A549 (cell line): ENCODE measurements at regions of chr10 and their contacts with region 1.

Region 1: DNA sequence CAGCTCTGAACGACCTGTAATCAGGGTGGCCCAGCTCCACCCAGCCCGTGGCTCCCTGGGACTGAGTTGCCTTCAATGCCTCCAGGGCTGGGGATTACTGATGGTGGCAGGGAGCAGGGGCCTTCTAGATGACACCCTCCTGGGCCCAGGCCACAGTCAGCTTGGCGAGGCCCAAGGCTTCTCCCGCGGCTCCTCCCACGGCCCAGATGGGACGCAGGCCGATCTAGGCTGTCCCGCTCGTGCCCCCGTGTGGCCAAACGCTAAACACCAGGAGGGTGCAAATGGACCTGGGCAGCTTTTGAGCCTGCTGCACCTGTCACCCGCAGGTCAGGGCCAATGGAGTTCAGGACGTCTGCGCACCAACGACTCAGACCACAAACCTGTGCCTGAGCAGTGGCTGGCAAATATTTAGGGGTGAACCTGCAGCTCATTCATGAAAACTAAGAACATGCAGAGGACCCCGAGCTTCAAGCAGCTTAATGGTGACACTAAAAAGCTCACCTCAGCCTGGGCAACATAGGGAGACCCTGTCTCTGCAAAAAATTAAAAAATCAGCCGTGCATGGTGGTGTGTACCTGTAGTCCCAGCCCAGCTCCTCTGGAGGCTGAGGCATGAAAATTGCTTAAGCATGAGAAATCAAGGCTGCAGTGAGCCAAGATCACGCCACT is 43.2 kb downstream of the ASB13 start:
- DNase-seq: peak; percentile 75 to 88
- ATAC-seq: peak; percentile 93 to 98
- H3K4me3 ChIP-seq: no peak overlapping the region
- H3K27ac ChIP-seq: peak overlapping the region; percentile 78 to 91
- H3K4me1 ChIP-seq: peaks cover 14% of the 10 kb centered on the region
- CTCF ChIP-seq: peak; percentile 86
- EP300 ChIP-seq: no peak
- POLR2A ChIP-seq: no peak
- RAD21 ChIP-seq: peak; percentile 99

Region 2: DNA sequence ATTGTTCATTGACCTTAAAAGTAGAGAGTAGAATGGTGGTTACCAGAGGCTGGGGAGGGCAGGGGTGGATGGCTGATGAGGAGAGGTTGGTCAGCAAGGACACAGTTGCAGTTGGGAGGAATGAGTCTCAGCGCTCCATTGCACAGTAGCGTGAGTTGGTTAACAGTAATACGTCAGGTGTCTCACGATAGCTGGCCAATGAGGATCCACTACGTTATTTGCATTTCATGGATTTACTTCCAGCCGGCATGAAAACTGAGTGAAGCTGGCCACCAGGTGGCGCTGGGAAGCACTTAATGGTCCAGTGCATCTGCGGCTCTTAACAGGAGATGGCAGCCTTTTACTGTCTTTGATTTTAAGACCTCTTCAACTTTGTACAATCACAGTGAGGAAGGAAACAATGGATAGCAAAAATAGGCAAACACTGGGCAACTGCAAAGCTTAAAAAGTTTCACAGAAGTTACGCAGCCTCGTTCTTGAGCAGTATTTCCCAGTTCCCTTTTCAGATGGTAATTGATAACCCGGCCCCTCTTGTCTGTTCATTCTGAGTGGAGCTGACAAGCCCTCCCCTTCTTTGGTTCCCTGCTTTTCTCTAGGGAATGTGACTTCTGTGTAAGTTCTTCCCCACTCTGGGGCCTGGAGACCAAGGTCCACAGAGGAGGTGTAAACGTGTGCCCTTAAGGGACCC is 773.5 kb before region 1 on chr10:
- CTCF ChIA-PET with region 1: interaction called, 21 read pairs
- POLR2A ChIA-PET with region 1: no interaction called
- DNase-seq: peak; percentile 80 to 98
- ATAC-seq: peak; percentile 85
- H3K4me3 ChIP-seq: no peak overlapping the region
- H3K27ac ChIP-seq: peak overlapping the region; percentile 91 to 95
- H3K4me1 ChIP-seq: peaks cover 65% of the 10 kb centered on the region
- CTCF ChIP-seq: peak; percentile 100
- EP300 ChIP-seq: no peak
- POLR2A ChIP-seq: no peak
- RAD21 ChIP-seq: peak; percentile 99 to 100

Region 3: DNA sequence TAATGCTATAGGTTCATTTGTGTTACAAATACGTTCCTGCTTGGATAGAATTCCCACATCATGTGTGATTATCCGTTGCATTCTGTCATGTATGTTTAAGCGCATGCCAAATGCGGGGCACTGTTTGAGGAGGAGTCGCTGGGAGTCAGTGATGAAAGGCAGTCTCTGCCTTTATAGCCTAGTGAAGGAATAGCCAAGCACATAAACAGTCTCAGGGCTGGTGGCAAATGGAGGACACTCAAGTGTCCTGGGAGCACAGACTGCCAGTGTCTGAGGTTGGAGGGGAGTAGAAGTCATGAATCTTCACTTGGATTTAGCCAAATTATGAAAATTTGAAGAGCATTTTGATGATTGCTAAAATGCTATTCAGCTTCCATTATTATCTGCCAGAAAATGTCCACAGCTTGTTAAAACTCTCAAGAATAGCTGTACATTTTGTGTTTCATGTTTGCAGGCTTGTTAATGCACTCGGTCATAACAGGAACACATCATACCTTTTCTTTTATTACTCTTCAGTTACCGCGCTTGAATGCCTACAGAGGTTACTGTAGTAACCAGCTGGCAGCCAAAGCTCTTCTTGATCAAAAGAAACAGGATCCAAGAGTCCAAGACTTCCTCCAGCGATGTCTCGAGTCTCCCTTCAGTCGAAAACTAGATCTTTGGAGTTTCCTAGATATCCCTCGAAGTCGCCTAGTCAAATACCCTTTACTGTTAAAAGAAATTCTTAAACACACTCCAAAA is 169.3 kb before region 1 on chr10:
- CTCF ChIA-PET with region 1: interaction called, 432 read pairs
- POLR2A ChIA-PET with region 1: no interaction called
- DNase-seq: no peak
- ATAC-seq: no peak
- H3K4me3 ChIP-seq: no peak overlapping the region
- H3K27ac ChIP-seq: no peak overlapping the region
- H3K4me1 ChIP-seq: peaks cover 29% of the 10 kb centered on the region; the same call in 2 of the 3 replicates
- CTCF ChIP-seq: no peak
- EP300 ChIP-seq: no peak
- POLR2A ChIP-seq: no peak
- RAD21 ChIP-seq: no peak

Region 4: DNA sequence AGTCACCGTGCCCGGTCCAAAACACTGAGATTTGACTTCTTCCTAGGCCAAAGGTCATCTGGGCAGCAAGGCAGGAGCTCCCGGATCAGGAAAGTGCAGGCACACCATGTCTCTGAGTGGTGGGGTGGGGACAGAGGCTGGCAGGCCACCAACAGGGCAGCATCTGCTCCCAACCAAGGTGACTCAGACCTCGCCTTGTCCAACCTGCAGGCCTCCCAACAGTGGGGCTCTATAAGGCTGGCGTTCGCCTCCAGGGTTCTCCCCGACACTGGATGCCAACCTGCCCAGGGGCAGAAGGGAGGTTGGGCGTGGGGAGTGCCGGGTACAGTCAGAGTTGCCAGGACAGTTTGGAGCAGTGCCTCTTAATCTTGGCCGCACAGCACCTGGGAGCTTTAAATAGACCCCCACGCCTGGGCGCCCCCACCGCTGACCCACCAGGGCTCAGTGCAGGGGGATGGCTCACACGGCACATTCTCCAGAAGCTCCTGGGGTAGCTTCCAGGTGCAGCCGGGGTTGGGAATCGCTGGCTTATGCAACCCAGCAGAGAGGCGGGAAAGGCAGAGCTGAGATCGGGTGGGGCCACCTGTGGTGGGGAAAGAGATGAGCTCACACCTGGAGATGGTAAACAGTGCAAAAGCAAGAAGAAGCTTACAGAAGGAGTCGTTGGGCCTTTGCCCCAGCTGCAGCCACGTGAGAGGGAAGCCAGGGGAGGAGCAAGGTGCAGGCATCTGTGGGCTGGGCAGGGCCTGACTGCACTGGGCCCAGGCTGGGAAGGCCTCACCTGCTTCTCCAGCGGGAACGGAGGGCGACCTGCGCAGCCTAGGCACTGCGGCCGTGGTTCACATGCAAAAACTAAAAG is 134.7 kb before region 1 on chr10:
- CTCF ChIA-PET with region 1: interaction called, 15 read pairs
- POLR2A ChIA-PET with region 1: no interaction called
- DNase-seq: no peak
- ATAC-seq: no peak
- H3K4me3 ChIP-seq: no peak overlapping the region
- H3K27ac ChIP-seq: peak overlapping the region in 1 of 2 experiments; percentile 9; a peak in 1 of 6 replicates
- H3K4me1 ChIP-seq: peaks cover 4% of the 10 kb centered on the region
- CTCF ChIP-seq: no peak
- EP300 ChIP-seq: no peak
- POLR2A ChIP-seq: no peak
- RAD21 ChIP-seq: no peak

Region 5: GRCh38 chr10:5548527-5549223 is 74.5 kb before region 1 on chr10:
- CTCF ChIA-PET with region 1: interaction called, 77 read pairs
- POLR2A ChIA-PET with region 1: interaction called, 3 read pairs
- DNase-seq: peak; percentile 96 to 98
- ATAC-seq: peak; percentile 75 to 77
- H3K4me3 ChIP-seq: peak overlapping the region; percentile 20; the same call in 1 of the 3 replicates
- H3K27ac ChIP-seq: peak overlapping the region; percentile 92 to 96
- H3K4me1 ChIP-seq: peaks cover 68% of the 10 kb centered on the region
- CTCF ChIP-seq: no peak
- EP300 ChIP-seq: peak; percentile 30 to 46; a peak in 2 of 5 replicates
- POLR2A ChIP-seq: no peak
- RAD21 ChIP-seq: peak; percentile 8 to 9; a peak in 1 of 5 replicates

Region 6: DNA sequence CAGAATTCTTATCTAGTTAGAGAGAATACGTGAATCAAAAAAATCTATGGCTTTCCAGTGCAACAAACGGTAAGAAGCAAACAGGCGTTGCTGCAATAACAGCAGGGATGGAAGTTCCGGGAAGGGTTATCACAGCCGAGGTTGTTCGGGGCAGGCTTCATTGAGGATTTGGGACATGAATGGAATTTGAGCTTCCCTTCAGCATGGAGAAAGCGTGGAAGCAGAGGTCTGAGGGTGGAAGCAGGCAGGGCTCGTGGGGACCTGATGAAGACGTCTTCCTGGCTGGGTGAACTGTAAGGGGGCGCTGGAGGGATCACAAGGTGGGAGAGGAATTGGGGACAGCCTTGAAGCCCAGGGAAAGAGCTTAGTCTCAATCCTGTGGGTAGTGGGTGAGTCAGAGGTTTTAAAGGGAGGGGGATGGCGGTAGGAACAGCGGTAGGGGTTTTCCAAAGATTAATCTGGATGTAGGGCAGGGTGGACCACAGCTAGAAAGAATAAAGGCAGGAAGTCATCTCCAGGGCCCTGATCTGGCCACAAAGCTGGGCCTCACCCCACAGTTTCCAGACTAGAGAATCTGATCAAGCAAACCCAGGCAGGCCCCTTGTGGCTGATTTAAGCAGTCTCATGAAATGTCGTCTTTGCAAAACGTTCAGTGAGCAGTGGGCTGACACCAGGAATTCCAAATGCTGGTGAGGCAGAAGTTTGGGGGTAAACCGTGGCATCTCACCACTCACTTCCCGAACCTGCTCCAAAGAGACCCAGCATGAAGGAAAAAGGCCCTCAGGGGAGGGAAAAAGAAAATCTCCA is 33.3 kb before region 1 on chr10:
- CTCF ChIA-PET with region 1: interaction called, 108 read pairs
- POLR2A ChIA-PET with region 1: no interaction called
- DNase-seq: peak; percentile 53 to 57
- ATAC-seq: peak; percentile 67 to 79; a peak in 3 of 6 replicates
- H3K4me3 ChIP-seq: no peak overlapping the region
- H3K27ac ChIP-seq: peak overlapping the region; percentile 40 to 77
- H3K4me1 ChIP-seq: peaks cover 49% of the 10 kb centered on the region
- CTCF ChIP-seq: peak; percentile 16; the same call in 2 of the 3 replicates
- EP300 ChIP-seq: no peak
- POLR2A ChIP-seq: no peak
- RAD21 ChIP-seq: peak; percentile 20 to 33; a peak in 3 of 5 replicates

Region 7: GRCh38 chr10:5654218-5654755 is 31.1 kb after region 1 on chr10:
- CTCF ChIA-PET with region 1: interaction called, 21 read pairs
- POLR2A ChIA-PET with region 1: no interaction called
- DNase-seq: no peak
- ATAC-seq: no peak
- H3K4me3 ChIP-seq: no peak overlapping the region
- H3K27ac ChIP-seq: no peak overlapping the region
- H3K4me1 ChIP-seq: peaks cover under 1% of the 10 kb centered on the region; the same call in 2 of the 3 replicates
- CTCF ChIP-seq: no peak
- EP300 ChIP-seq: no peak
- POLR2A ChIP-seq: no peak
- RAD21 ChIP-seq: no peak